ENCODE measurements at regions of chr2 and their contacts with region 1.

Region 1: GRCh38 chr2:195659982-195660890 is 3.2 kb downstream of the SLC39A10 start:
- DNase-seq: no peak
- ATAC-seq: no peak

Region 2: DNA sequence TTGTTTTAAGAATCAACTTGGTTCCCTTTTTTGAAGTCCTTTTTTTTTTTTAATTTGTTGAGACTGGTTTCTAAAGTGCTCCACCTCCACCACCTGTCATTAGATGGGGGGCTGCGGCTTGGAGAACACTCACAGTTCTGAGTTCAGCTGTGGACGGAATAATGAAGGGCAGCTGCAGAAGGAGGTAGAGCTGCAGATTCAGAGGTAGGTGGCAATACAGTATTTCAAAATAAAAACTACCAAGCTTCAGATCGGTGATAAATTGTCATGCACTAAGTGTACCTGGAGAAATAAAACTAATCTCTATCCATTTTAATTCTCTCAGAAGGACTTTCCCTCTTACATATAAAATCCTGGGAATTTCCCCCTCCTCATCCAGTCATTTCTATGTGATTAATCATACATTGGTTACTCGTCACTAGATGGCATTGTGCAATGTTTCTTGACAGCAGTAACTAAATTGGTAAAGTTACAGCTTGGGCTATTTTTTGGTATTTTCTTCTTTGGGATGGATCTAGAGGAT is 84.3 kb before region 1 on chr2:
- intact Hi-C with region 1: loop called (anchors 5 kb)
- DNase-seq: no peak
- ATAC-seq: peak; percentile 48

Region 3: DNA sequence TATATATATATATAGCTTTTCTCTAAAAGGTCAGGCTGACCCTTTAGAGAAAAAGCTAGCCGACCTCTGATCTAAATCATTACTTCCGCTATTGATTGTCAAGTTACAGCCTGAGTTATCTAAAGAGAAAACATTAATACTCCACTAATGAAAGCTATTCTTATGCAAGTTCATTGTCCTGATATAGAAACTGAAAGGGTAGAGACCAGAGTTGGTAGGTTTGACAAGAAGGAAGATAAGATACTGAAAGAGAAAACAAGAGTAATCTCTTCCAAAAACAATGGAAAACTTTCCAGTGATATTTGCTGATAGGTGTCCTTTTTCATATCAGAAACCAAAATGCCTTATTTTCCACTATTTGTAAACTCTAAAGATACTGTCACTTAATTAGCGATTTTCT is 66.0 kb before region 1 on chr2:
- intact Hi-C with region 1: no loop called
- DNase-seq: no peak
- ATAC-seq: no peak

Measured in left ventricle myocardium superior (tissue), 1 donor.